AG04449 (cell line): ENCODE measurements at regions of chr6 and their contacts with region 1.

Region 1: GRCh38 chr6:133512410-133513016 is 271.4 kb downstream of the EYA4 start:
- DNase-seq: no peak
- H3K4me3 ChIP-seq: no peak overlapping the region
- CTCF ChIP-seq: peak; percentile 67

Region 2: GRCh38 chr6:132820629-132821381 is 691.7 kb before region 1 on chr6:
- CTCF ChIA-PET with region 1: interaction called, 12 read pairs
- POLR2A ChIA-PET with region 1: no interaction called
- DNase-seq: no peak
- H3K4me3 ChIP-seq: no peak overlapping the region
- CTCF ChIP-seq: no peak

Region 3: GRCh38 chr6:132962936-132963868 is 549.3 kb before region 1 on chr6:
- CTCF ChIA-PET with region 1: interaction called, 16 read pairs
- POLR2A ChIA-PET with region 1: no interaction called
- DNase-seq: no peak
- H3K4me3 ChIP-seq: no peak overlapping the region
- CTCF ChIP-seq: peak; percentile 79

Region 4: DNA sequence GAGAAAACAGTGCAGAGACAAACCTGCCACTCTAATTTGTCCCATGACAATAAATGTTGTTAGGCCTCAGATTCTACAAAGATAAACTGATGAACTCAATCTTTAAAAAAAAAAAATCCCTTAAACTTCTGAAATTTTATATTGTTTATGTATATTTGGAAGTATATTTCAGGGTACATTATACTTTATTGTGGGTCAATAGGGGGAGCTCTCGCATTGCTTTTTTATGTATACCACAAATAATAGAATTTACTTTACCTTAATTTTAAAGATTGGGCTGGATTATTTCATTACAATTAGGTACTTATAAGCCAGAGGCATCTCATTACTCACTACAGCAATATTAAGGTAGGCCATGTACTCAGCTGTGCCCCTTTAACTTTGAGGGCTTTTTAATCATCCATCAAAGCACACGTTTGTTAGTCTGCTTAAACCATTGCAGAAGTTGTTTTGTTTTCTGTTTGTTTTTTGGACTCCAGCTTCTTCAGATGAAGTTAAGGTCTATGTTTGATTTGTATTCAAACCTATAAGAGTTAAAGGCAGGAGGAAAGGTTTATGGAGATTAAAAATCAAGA is 327.6 kb before region 1 on chr6:
- CTCF ChIA-PET with region 1: interaction called, 21 read pairs
- POLR2A ChIA-PET with region 1: no interaction called
- DNase-seq: peak; percentile 3
- H3K4me3 ChIP-seq: no peak overlapping the region
- CTCF ChIP-seq: peak; percentile 22